AG04449 (cell line): ENCODE measurements at regions of chr20 and their contacts with region 1.

Region 1: DNA sequence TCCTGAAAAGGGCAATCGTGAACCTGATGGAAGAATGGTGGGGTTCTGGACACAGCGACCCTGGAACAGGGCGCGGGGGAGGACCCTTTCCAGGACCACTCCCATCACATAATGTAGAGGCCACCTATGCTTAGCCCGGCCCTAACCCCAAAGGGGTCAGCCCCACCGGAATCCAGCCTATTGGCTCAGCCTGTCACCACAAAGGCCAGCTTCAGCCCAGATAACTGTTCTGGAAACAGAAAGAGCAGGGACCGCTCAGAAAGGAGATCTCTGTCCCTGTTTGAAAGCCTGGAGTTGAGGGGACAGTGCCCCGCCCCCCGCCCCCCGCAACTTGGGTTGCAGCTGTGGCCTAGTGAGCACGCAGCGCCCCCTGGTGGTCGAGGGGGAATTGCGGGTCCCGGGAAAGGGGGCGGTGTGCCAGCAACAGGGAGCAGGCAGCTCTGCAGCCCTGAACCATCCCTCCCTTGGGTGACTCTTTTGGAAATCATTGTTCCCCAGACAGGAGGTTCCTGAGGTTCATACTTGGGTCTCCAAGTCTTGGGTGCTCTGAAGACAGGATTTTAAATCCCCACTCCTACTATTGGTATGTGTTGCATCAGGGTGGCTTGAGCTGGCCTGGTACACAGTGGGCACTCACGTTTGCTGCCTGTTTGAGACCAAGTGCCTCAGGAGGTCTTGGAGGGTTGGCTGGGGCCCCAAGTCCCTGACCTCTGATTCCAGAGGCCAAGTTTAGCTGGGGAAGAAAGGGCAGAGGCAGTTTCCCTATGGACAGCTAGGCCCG is 1.5 kb downstream of the SIGLEC1 start:
- DNase-seq: no peak
- H3K4me3 ChIP-seq: no peak overlapping the region
- CTCF ChIP-seq: peak; percentile 94

Region 2: DNA sequence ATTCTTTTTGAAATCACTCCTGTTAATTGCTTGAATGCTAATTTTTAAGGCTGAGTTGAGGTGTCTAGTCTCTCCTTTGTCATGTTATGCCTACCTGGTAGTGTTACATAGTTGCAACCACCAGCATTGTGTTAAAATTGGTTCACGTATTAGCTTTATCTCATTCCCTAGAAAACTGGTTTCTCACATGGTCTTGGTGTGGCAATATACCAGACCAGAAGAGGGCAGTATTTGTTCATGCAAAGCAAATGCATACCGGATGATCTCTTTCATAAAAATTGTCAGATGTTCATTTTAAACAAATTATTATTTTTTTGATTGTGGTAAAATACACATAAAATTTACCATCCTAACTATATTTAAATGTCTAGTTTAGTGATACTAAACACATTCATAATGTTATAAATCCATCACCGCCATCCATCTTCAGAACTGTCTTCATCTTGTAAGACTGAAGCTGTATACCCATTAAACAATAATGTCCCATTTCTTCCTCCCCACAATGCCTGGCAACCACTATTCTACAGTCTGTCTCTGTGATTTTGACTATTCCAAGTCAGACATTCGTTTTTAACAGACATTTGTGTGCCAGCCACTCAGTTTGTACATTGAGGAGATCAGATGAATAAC is 147.2 kb before region 1 on chr20:
- CTCF ChIA-PET with region 1: interaction called, 26 read pairs
- POLR2A ChIA-PET with region 1: no interaction called
- DNase-seq: peak; percentile 10
- H3K4me3 ChIP-seq: no peak overlapping the region
- CTCF ChIP-seq: peak; percentile 62

Region 3: DNA sequence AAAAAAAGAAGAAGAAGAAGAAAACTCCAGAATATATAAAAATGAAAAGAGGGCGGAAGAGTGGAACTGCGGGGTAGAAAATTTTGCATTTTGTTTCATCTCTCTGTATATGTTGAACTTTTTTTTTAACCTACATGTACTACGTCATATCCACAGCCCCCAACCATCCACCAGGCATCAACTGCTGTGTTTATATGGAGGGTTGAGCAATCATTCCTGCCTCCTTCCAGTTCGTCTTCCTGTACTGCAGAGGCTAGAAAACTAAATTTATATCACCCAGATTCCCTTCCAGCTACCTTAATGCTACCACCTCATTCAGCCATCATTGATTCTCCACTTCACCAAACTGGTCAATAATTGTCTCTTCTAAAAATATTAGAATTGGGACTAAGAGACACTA is 11.0 kb after region 1 on chr20:
- CTCF ChIA-PET with region 1: interaction called, 1,151 read pairs
- POLR2A ChIA-PET with region 1: no interaction called
- DNase-seq: no peak
- H3K4me3 ChIP-seq: no peak overlapping the region
- CTCF ChIP-seq: no peak

Region 4: GRCh38 chr20:3739054-3739925 is 28.4 kb after region 1 on chr20:
- CTCF ChIA-PET with region 1: interaction called, 22 read pairs
- POLR2A ChIA-PET with region 1: no interaction called
- DNase-seq: no peak
- H3K4me3 ChIP-seq: no peak overlapping the region
- CTCF ChIP-seq: no peak

Region 5: GRCh38 chr20:3767427-3768341 is 56.8 kb after region 1 on chr20 and contains the start of gene ADISSP:
- CTCF ChIA-PET with region 1: interaction called, 19 read pairs
- POLR2A ChIA-PET with region 1: no interaction called
- DNase-seq: peak; percentile 83
- H3K4me3 ChIP-seq: peak within 1 kb of the TSS; percentile 87
- CTCF ChIP-seq: peak; percentile 17